IMR-90 (cell line): ENCODE measurements at regions of chr11 and their contacts with region 1.

Region 1: DNA sequence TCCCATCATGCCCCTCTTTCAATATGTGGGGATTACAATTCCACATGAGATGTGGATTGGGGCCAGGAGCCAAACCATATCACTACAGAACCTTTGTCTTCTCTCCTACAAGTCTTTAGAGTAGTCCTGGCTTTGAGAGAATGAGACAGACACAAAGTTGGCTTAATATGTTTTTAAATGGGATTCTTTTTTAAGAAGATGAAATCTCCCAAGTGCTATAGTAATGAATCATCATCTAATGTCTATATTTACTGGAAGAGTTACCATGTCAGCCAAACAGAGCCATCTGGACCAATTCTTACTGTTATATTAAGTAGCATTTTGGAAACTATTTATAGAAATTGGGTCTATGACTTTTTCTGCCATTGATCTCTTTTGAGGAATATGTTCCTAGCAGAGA is 38.1 kb upstream of the CARD18 start:
- DNase-seq: peak; percentile 92
- ATAC-seq: peak; percentile 72
- H3K4me3 ChIP-seq: no peak overlapping the region
- H3K27ac ChIP-seq: peak overlapping the region; percentile 65; the same call in 1 of the 2 replicates
- H3K4me1 ChIP-seq: peaks cover 5% of the 10 kb centered on the region
- H3K27me3 ChIP-seq: no peaks in the 10 kb centered on the region
- CTCF ChIP-seq: no peak
- POLR2A ChIP-seq: no peak
- RAD21 ChIP-seq: no peak

Region 2: DNA sequence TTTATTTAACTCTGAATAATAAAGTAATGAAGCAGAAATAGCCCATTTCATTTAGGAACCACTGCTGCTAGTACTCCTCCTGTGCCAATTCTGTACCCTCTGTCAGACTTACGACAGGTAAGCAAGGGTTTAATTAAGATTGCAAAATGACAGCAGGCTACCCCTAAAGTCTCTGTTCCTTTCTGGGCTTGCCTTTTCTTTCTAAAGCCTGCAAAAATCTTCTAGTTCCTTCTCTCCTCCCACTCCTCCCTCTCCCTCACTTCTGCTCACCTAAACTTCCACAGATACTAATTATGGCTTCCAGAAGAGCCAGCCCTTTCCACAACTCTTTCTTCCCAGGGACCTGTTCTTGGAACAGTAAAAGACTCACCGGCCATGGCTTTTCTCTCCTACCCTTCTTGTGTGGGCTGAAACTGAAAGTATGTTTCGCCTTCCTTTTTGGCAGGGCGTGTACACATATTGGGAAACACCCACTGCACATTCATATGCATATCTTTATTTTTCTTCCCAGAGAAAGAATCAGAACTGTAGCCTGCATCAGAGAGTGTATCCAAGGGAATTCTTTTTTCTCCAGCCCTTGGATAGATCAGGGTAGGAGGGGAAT is 132.6 kb before region 1 on chr11 and contains the start of gene CARD16:
- CTCF ChIA-PET with region 1: no interaction called
- POLR2A ChIA-PET with region 1: no interaction called
- dilution Hi-C with region 1: no loop called
- in situ Hi-C with region 1: no loop called
- intact Hi-C with region 1: loop called (anchors 5 kb)
- DNase-seq: peak; percentile 81
- ATAC-seq: peak; percentile 37
- H3K4me3 ChIP-seq: peak within 1 kb of the TSS; percentile 82
- H3K27ac ChIP-seq: peak within 1 kb of the TSS; percentile 96
- H3K4me1 ChIP-seq: peaks cover 9% of the 10 kb centered on the region
- H3K27me3 ChIP-seq: no peaks in the 10 kb centered on the region
- CTCF ChIP-seq: no peak
- POLR2A ChIP-seq: no peak
- RAD21 ChIP-seq: no peak
- total RNA-seq, gene CARD16: 7.9 and 23.3 TPM in 2 replicates